ENCODE measurements at regions of chr1 and their contacts with region 1.

Region 1: GRCh38 chr1:156146020-156146768 is 7.2 kb upstream of the SEMA4A start:
- DNase-seq: peak; percentile 35
- H3K4me3 Mint-ChIP-seq: peak overlapping the region; percentile 18
- H3K27ac Mint-ChIP-seq: peak overlapping the region; percentile 76
- H3K4me1 Mint-ChIP-seq: peaks cover 36% of the 10 kb centered on the region
- H3K27me3 Mint-ChIP-seq: no peaks in the 10 kb centered on the region

Region 2: DNA sequence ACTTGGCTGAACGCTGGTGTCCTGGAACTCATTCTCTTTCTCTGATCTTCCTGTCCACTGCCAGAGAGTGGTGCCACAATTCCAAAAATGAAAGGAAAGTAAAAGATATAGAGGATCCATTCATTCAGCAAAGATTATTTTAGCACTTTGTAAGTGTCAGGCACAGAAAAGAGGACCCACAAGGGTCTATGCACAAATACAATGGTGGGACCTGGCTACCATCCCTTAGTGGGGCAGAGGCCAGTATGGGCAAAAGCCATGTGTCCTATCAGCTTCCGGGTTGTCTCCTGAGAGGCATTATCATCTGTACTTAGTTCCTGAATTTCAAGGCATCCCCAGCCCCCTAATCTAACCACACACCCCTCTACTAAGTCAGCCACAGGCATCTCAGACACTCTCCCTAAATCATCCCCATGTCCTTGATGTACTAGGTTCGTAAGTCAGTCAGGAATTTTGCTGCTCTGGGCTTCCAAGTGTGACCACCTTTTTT is 144.5 kb before region 1 on chr1:
- intact Hi-C with region 1: no loop called
- DNase-seq: no peak
- H3K4me3 Mint-ChIP-seq: no peak overlapping the region
- H3K27ac Mint-ChIP-seq: no peak overlapping the region
- H3K4me1 Mint-ChIP-seq: peaks cover 17% of the 10 kb centered on the region
- H3K27me3 Mint-ChIP-seq: no peaks in the 10 kb centered on the region

Region 3: DNA sequence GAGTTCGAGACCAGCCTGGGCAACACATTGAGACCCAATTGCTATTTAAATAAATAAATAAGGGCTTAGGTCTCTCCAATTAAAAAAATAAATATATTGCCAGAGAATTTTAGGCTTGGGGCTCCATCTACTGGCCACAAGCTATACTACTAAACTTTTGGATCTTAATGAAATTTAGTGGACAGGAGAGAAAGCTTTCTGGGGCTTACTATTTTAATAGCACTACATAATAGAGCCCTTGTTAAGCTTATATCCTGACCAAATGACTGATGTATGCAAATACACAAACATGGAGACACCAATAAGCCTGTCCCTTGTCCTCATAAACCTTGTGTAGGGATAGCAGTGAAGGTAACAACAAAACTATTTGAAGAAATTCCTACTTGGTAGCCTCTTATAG is 173.5 kb after region 1 on chr1:
- intact Hi-C with region 1: loop called (anchors 10 kb)
- DNase-seq: no peak
- H3K4me3 Mint-ChIP-seq: no peak overlapping the region
- H3K27ac Mint-ChIP-seq: no peak overlapping the region
- H3K4me1 Mint-ChIP-seq: no peaks in the 10 kb centered on the region
- H3K27me3 Mint-ChIP-seq: no peaks in the 10 kb centered on the region